Prostate gland (tissue), 2 donors: ENCODE measurements at regions of chr2 and their contacts with region 1.

Region 1: DNA sequence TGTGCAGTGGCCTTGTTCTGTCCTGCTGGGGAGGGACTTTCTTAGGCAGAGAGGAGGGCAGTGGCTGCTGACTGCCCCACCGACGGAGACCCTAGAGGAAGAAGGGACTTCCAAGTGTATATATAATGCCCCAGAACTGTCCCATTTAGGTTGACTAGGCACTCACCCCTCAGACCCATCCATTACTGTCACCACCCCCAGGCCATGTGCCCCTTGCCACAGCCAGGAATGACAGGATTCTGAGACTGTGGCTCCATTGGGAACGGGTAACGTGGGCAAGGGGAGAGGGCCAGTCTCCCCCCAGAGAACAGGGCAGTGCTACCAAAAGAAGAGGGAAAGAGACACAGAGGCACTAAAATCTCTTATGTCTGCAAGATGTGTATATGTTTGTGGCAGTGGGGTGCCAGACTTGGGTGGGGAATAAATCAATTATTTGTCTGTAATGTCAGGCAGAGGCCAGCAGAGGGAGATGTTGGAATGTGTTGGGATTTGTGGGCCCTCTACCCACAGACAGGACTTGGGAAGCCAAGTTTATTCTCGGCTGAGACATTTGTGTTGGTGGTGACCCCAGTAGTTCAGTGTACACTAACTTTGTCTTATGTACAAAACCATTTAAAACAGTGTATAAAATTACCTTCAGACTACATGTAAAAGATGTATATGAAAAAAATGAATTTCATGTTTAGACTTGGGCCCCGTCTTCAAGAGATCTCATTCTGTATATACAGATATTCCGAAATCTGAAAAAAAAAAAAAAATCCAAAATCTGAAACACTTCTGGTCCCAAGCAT is 24.0 kb upstream of the TMEM37 start:
- DNase-seq: peak; percentile 29
- H3K4me3 ChIP-seq: no peak overlapping the region
- H3K27ac ChIP-seq: no peak overlapping the region
- H3K4me1 ChIP-seq: no peaks in the 10 kb centered on the region
- H3K27me3 ChIP-seq: no peaks in the 10 kb centered on the region
- CTCF ChIP-seq: peak; percentile 21 to 88 (median 80)
- POLR2A ChIP-seq: no peak

Region 2: DNA sequence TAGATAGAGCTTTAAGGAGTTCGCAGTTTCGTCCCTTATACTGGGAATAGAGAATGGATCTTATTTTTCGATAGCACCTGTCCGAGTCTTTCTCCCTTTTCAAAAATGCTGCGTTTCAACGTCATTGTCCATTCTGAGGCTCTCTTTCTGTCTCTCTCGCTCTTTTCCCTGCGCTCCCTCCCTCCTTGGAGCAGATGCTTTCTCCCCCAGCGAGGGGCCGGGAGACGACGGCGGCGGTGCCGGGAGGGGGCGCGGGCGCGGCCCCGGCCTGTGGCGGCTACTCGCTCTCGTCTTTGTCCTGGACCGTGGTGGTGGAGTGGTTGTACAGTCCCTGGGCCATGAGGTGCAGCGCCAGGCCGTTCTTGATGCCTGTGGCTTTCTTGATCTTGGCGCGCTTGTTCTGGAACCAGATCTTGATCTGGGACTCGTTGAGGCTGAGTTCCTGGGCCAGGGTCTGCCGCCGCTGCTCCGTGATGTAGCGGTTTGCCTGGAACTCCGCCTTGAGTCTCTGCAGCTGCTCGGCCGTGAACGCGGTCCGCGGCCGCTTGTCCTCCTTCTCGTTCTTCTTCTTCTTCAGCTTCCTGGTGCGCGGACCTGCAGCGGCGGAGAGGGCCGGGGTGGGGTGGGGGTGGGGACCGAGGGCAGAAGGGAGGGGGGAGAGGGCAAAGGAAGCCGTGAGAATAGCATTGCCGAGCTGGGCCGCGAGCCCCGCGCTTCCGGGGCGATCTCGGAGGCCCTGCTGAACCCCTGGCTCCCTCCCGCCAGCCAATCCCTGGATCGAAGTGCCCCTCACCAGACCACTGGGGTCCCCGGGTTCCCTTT is 564.8 kb before region 1 on chr2:
- intact Hi-C with region 1: no loop called
- DNase-seq: no peak
- H3K4me3 ChIP-seq: no peak overlapping the region
- H3K27ac ChIP-seq: no peak overlapping the region
- H3K4me1 ChIP-seq: no peaks in the 10 kb centered on the region
- H3K27me3 ChIP-seq: peaks cover 60% of the 10 kb centered on the region
- CTCF ChIP-seq: no peak
- POLR2A ChIP-seq: no peak

Region 3: DNA sequence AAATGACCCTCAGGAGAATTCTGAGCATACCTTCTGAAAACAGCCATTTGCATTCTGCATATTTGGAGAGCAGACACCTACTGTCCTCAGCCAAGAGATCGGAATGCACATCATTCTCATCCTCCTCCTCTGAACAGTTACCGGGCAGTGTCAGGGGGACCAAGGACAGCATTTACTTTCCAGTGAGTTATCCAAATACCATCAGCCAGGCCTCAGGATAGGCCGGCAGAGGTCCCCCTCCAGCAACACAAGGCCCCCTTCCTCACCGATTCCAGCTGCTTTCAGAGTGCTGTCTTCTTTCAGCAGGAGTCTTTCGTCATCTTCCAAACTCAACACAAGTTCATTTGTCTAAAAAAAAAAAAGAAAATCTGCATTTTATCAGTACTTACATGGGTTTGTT is 96.3 kb before region 1 on chr2:
- intact Hi-C with region 1: no loop called
- DNase-seq: no peak
- H3K4me3 ChIP-seq: no peak overlapping the region
- H3K27ac ChIP-seq: no peak overlapping the region
- H3K4me1 ChIP-seq: no peaks in the 10 kb centered on the region
- H3K27me3 ChIP-seq: no peaks in the 10 kb centered on the region
- CTCF ChIP-seq: no peak
- POLR2A ChIP-seq: no peak

Region 4: GRCh38 chr2:119476301-119477021 is 68.8 kb after region 1 on chr2:
- intact Hi-C with region 1: loop called (anchors 2 kb)
- DNase-seq: peak; percentile 17
- H3K4me3 ChIP-seq: no peak overlapping the region
- H3K27ac ChIP-seq: no peak overlapping the region
- H3K4me1 ChIP-seq: no peaks in the 10 kb centered on the region
- H3K27me3 ChIP-seq: no peaks in the 10 kb centered on the region
- CTCF ChIP-seq: peak; percentile 82 to 94 (median 86)
- POLR2A ChIP-seq: no peak

Region 5: DNA sequence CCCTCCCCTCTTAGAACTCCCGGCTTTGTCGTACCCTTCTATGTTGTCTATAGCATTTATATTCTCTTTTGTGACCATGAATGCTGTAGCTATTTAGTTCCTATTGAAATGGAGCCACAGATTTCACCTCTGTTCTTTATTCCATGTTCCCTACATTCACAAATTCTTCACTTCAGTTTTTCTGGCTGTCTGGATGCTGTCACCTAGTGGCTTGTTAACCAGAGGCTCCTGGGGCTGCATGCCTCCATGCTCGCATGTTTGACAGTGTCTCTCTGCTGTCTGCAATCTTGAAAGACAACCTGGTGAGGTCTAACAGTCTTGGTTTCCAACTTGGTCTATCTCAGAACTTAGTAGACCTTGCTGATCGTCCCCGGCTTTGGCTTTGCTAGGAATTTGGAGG is 184.8 kb after region 1 on chr2:
- intact Hi-C with region 1: loop called (anchors 5 kb)
- DNase-seq: no peak
- H3K4me3 ChIP-seq: no peak overlapping the region
- H3K27ac ChIP-seq: no peak overlapping the region
- H3K4me1 ChIP-seq: no peaks in the 10 kb centered on the region
- H3K27me3 ChIP-seq: no peaks in the 10 kb centered on the region
- CTCF ChIP-seq: no peak
- POLR2A ChIP-seq: no peak

Region 6: DNA sequence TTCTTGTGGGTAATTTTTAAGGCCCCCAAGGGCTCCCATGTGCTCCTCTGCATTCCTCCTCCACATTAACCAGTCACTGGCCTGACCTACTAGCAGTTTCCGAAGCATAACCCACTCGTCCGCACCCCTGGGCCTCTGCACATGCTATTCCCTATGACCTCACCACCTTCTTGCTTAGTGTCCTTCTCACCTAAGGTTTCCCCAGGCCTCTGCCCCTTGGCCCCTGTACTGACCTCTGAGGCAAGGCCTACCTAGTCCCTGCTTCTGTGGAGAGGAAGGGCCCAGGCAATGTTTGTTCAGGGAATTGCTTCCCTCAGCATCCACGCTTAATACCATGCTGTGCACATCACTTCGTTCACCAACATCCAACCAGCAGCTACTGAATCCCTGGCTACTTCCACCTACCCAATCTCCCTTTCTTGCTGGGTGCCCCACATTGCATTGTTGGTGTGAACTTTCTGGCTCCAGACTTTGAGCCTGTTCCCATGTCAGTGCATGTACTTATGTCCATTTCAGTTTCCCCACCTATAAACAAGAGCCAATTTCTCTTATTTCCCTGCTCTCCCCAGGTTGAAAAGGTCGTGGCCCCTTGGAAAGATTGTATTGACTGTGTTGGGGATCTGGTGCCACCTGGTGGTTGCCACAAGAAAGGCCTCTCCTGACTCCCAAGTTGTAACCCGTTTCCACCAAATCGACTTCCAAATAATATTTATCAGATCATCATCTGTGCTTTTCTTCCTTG is 252.1 kb after region 1 on chr2:
- intact Hi-C with region 1: loop called (anchors 5 kb)
- DNase-seq: no peak
- H3K4me3 ChIP-seq: no peak overlapping the region
- H3K27ac ChIP-seq: no peak overlapping the region
- H3K4me1 ChIP-seq: no peaks in the 10 kb centered on the region
- H3K27me3 ChIP-seq: no peaks in the 10 kb centered on the region
- CTCF ChIP-seq: peak; percentile 69 to 75 (median 71)
- POLR2A ChIP-seq: no peak